GM12878 (cell line): ENCODE measurements at regions of chr3 and their contacts with region 1.

Region 1: DNA sequence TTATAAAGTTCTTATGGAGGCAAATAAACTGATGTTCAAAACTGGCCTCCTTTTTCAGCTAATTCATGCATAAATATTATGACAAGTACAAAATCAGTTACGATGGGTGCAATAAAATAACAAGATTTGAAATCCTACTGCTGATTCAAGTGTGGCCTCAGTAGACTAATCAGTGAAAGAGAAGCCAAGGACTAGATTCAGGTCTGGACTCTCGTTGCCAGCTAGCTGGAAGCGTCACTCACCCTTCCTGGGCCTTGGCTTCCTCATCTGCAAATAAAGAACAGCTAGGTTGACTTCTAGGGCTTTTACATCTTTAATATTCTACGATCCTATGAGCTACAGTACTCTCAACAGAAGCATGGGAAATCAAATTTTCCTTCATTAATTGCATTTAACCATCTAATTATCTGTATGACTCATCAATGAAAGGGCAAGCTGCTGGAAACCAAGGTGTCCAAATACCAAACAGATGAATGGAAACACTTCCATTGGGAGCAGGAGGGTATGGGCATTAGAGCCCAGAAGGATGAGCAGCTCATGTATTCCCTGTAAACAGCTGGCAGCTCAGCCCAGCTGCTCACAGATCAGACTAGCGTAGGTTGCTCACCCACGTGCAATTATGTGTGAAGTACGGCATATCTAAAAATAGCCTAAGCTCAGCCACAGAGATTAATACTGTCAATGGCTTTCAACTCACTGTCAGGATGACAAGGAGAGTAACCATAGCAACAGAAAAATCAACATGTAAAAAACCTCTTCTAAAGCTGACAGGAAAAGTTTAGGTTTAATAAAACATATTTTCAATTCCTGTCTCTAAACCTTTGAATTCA is 294.8 kb downstream of the PLCL2 start:
- DNase-seq: peak; percentile 56
- ATAC-seq: peak; percentile 84
- H3K4me3 ChIP-seq: no peak overlapping the region
- H3K27ac ChIP-seq: no peak overlapping the region
- H3K4me1 ChIP-seq: peaks cover 38% of the 10 kb centered on the region
- H3K27me3 ChIP-seq: no peaks in the 10 kb centered on the region
- CTCF ChIP-seq: no peak
- EP300 ChIP-seq: peak; percentile 82 to 97
- POLR2A ChIP-seq: no peak
- RAD21 ChIP-seq: no peak

Region 2: GRCh38 chr3:17006132-17006852 is 173.3 kb before region 1 on chr3:
- CTCF ChIA-PET with region 1: no interaction called
- POLR2A ChIA-PET with region 1: no interaction called
- RAD21 ChIA-PET with region 1: no interaction called
- SMC1A ChIA-PET with region 1: no interaction called
- in situ Hi-C with region 1: no loop called
- intact Hi-C with region 1: no loop called
- DNase-seq: no peak
- ATAC-seq: peak; percentile 72
- H3K4me3 ChIP-seq: no peak overlapping the region
- H3K27ac ChIP-seq: no peak overlapping the region
- H3K4me1 ChIP-seq: peaks cover 9% of the 10 kb centered on the region; the same call in 1 of the 2 replicates
- H3K27me3 ChIP-seq: no peaks in the 10 kb centered on the region
- CTCF ChIP-seq: no peak
- EP300 ChIP-seq: no peak
- POLR2A ChIP-seq: no peak
- RAD21 ChIP-seq: no peak

Region 3: GRCh38 chr3:17190353-17191078 is 10.9 kb after region 1 on chr3:
- CTCF ChIA-PET with region 1: interaction called, 43 read pairs
- POLR2A ChIA-PET with region 1: interaction called, 24 read pairs
- RAD21 ChIA-PET with region 1: interaction called, 62 read pairs
- SMC1A ChIA-PET with region 1: interaction called, 105 read pairs
- in situ Hi-C with region 1: no loop called
- intact Hi-C with region 1: no loop called
- DNase-seq: no peak
- ATAC-seq: 0 out of 3 replicates have a peak, but pooled peaks have one; percentile 12
- H3K4me3 ChIP-seq: no peak overlapping the region
- H3K27ac ChIP-seq: no peak overlapping the region
- H3K4me1 ChIP-seq: peaks cover 23% of the 10 kb centered on the region
- H3K27me3 ChIP-seq: no peaks in the 10 kb centered on the region
- CTCF ChIP-seq: no peak
- EP300 ChIP-seq: no peak
- POLR2A ChIP-seq: no peak
- RAD21 ChIP-seq: no peak

Region 4: GRCh38 chr3:17278006-17278405 is 98.4 kb after region 1 on chr3:
- CTCF ChIA-PET with region 1: no interaction called
- POLR2A ChIA-PET with region 1: no interaction called
- RAD21 ChIA-PET with region 1: no interaction called
- SMC1A ChIA-PET with region 1: no interaction called
- in situ Hi-C with region 1: no loop called
- intact Hi-C with region 1: no loop called
- DNase-seq: no peak
- ATAC-seq: no peak
- H3K4me3 ChIP-seq: no peak overlapping the region
- H3K27ac ChIP-seq: no peak overlapping the region
- H3K4me1 ChIP-seq: no peaks in the 10 kb centered on the region
- H3K27me3 ChIP-seq: no peaks in the 10 kb centered on the region
- CTCF ChIP-seq: no peak
- EP300 ChIP-seq: no peak
- POLR2A ChIP-seq: no peak
- RAD21 ChIP-seq: no peak